Right ventricle myocardium superior (tissue), 1 donor: ENCODE measurements at regions of chr19 and their contacts with region 1.

Region 1: GRCh38 chr19:4064496-4065260 is 2.0 kb downstream of the ZBTB7A start:
- DNase-seq: peak; percentile 72
- ATAC-seq: no peak

Region 2: DNA sequence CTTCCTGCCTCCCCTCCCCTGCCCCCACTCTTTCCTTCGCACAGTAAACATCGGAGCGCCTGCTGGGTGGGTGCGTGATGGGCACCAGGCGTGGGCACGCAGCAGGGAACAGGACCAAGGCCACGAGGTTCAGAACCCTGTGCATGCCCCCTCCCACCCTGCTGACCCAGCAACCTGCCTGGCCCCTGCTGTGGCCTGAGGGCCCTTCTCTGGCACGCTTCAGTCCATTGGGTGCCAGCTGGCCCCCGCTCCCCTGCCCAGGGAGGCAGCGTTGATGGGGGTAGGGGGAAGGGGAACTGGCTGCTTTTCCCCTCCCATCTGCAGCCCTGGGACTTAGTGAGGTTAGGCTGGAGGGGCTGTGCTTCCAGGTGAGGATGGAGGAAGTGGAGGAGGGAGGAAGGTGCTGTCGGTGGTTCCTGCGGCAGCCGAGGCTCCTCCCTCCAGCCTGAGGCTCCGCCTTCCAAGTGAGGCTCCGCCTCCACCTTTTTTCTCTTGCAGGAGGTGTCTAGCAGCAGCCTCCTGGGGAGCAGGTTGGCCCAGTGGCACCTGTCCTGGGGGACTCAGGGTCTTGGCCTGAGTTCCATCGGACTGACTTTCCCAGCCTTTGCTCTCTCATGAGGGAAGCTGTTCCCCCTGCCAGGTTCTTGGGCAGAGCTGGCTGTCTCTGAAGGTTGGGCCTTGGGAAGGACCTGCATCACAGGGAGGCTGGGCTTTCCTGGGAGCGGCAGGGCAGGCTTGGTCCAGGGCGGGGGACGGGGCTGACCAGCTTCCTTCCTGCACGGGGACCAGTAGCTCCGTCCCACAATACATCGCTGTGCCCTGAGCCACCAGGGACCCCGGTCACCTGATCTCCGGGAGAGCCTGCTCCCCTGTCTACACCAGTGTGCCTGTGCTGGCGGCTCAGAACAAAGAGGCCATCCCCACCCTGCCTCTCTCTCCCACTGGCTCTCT is 49.9 kb before region 1 on chr19:
- intact Hi-C with region 1: loop called (anchors 5 kb)
- DNase-seq: peak; percentile 68
- ATAC-seq: peak; percentile 10